Heart left ventricle (tissue), 16 donors: ENCODE measurements at regions of chr3 and their contacts with region 1.

Region 1: DNA sequence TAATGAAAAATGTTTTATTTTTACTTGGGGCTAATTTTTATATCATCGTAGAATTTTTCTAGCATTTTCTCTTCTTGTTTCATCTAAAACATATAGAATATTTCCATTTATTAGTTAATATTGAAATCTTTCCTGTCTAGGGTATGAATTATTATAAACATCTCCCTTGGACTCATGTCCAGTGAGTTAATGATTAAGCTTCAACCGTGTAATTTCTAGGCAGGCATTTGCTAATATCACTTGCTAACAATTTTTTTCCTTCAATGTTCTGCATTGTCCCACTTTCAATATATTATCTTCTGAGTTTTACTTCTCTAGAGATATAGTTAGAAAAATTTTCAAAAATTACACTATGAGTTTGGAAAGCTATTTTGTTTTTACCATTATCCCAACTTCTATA is 1371.6 kb upstream of the EPHA6 start:
- DNase-seq: no peak
- ATAC-seq: no peak
- H3K4me3 ChIP-seq: no peak overlapping the region
- H3K27ac ChIP-seq: no peak overlapping the region
- H3K4me1 ChIP-seq: no peaks in the 10 kb centered on the region
- H3K27me3 ChIP-seq: no peaks in the 10 kb centered on the region
- CTCF ChIP-seq: no peak
- POLR2A ChIP-seq: no peak

Region 2: DNA sequence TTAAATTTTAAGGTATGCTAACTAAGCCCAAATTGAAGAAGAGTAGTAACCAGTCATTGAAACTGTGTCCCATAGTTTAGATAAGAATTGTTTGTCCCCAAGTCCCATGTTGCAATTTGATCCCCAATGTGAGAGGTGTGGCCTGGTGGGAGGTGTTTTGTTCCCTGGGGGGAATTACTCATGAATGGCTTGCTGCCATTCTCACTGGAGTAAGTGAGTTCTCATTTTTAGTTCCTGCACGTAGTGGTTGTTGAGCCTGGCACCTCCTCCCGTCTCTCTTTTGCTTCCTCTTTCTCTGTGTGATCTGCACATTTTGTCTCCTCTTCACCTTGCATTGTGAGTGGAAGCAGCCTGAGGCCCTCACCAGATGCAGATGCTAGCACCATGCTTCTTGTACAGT is 108.9 kb before region 1 on chr3:
- intact Hi-C with region 1: no loop called
- DNase-seq: no peak
- ATAC-seq: no peak
- H3K4me3 ChIP-seq: no peak overlapping the region
- H3K27ac ChIP-seq: no peak overlapping the region
- H3K4me1 ChIP-seq: no peaks in the 10 kb centered on the region
- H3K27me3 ChIP-seq: no peaks in the 10 kb centered on the region
- CTCF ChIP-seq: no peak
- POLR2A ChIP-seq: no peak

Region 3: GRCh38 chr3:96719921-96720320 is 1277.2 kb after region 1 on chr3:
- intact Hi-C with region 1: loop called in 1 of 10 experiments (anchors 10 kb)
- DNase-seq: no peak
- ATAC-seq: no peak
- H3K4me3 ChIP-seq: no peak overlapping the region
- H3K27ac ChIP-seq: no peak overlapping the region
- H3K4me1 ChIP-seq: no peaks in the 10 kb centered on the region
- H3K27me3 ChIP-seq: no peaks in the 10 kb centered on the region
- CTCF ChIP-seq: no peak
- POLR2A ChIP-seq: no peak